ENCODE measurements at regions of chr5 and their contacts with region 1.

Region 1: DNA sequence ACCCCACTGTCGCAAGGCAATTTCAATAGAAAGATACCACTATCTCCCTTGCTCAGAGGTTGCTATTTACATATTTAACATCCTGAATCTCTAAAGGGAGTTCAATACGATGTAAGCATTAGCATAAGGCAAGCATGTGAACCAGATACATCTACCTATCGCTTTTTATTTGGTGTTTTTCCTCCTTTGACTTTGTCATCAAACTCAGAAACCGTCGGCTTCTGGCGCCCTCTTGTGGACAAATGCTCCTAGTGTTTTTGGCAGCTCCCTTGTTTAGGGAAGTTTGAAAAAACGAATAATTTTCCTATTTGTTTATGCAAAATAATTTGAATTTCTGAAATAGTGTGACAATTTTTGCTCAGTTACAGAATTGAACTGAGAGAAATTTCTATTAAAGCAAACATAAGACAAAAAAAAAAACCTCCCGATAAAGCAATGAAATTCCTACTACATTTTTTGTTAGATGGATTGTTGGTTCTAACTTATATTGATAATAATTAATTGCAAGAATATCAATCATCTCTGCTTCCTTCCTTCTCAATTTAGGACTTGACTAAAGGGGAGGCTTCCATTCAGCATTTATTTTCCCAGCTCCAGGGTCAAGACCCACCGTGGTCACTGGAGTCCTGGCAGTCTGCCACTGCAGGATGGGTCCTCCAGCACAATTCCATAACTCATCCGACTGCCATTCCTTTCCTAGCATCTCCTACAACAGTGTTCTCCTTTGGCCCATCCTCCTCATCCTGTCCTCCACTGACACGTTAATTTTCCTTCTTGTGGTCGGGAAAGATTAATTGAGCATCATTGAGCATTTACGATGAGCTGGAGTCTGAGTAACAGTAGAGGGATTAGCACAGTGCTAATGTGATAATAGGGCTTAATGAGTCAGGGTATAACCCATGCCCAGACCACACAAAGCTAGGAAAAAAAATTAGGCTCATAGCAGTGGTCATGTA is 131.8 kb upstream of the CHD1 start:
- DNase-seq: peak; percentile 34
- ATAC-seq: peak; percentile 79
- H3K4me3 ChIP-seq: peak overlapping the region; percentile 0; the same call in 1 of the 2 replicates
- H3K27ac ChIP-seq: no peak overlapping the region
- H3K4me1 ChIP-seq: peaks cover 18% of the 10 kb centered on the region
- H3K27me3 ChIP-seq: no peaks in the 10 kb centered on the region
- CTCF ChIP-seq: peak; percentile 76 to 87 (median 82)
- EP300 ChIP-seq: no peak
- POLR2A ChIP-seq: no peak
- RAD21 ChIP-seq: peak; percentile 95

Region 2: DNA sequence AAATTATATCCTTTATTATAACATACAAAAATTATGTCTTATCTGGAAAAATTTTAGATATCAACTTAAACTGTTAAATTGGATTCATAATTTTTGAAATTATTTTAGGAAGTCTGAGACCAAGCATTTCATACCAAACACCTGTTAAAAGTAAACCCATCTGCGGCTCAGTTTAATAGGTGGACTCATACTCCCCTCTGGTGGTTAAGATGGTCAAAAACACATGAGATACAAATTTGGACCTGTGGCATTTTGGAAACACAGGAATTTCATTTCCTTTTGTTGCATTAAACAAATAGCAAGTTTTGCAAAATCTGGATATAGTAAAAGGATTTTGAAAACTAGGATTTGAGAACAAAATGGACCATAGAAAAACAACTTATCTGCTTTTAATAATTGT is 233.4 kb before region 1 on chr5:
- CTCF ChIA-PET with region 1: interaction called, 6 read pairs
- POLR2A ChIA-PET with region 1: no interaction called
- RAD21 ChIA-PET with region 1: no interaction called
- SMC1A ChIA-PET with region 1: interaction called, 14 read pairs
- in situ Hi-C with region 1: no loop called
- intact Hi-C with region 1: no loop called
- DNase-seq: no peak
- ATAC-seq: peak; percentile 83
- H3K4me3 ChIP-seq: no peak overlapping the region
- H3K27ac ChIP-seq: no peak overlapping the region
- H3K4me1 ChIP-seq: no peaks in the 10 kb centered on the region
- H3K27me3 ChIP-seq: no peaks in the 10 kb centered on the region
- CTCF ChIP-seq: peak; percentile 46 to 60 (median 47); a peak in 5 of 6 replicates
- EP300 ChIP-seq: no peak
- POLR2A ChIP-seq: no peak
- RAD21 ChIP-seq: peak; percentile 88

Region 3: DNA sequence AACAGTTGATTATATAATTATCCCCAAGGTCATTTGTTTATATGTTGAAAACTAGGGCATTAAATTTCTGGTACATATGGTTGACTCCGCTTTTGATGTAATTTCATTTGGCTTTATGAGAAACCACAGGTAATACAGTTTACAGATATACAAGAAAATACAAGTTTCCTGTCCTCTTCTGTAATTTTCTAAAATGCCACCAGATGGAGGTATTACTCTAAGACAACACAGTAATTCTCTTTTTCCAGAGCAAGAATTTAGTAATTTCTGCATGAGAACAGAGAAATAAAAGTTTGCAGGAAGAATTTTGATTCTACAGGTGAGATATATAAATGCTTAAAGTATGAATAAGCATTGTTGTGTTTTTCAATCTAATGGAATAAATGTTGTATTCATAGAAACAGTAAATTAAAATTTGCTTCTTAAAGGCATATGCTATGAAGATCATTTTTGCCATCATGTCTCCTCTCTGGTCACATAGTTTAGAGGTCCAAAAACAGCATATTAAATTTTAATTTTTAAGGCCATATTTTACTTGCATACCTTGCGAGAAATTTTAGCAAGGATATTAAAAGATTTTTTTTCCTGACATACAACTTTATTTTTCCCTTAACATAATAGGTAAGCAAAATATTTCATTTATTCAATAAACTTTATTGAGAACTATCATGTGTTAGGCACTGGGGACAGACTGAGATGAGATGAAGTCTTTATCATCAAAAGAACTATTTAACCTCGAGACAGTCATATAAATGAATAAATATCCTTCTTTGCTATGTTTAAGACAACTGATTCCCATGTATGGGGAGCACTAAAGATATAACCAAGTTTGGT is 154.5 kb before region 1 on chr5:
- CTCF ChIA-PET with region 1: interaction called, 34 read pairs
- POLR2A ChIA-PET with region 1: no interaction called
- RAD21 ChIA-PET with region 1: interaction called, 38 read pairs
- SMC1A ChIA-PET with region 1: interaction called, 26 read pairs
- in situ Hi-C with region 1: no loop called
- intact Hi-C with region 1: loop called (anchors 1 kb)
- DNase-seq: no peak
- ATAC-seq: peak; percentile 70
- H3K4me3 ChIP-seq: no peak overlapping the region
- H3K27ac ChIP-seq: no peak overlapping the region
- H3K4me1 ChIP-seq: no peaks in the 10 kb centered on the region; the same call in 1 of the 2 replicates
- H3K27me3 ChIP-seq: no peaks in the 10 kb centered on the region
- CTCF ChIP-seq: peak; percentile 47 to 65 (median 47); a peak in 5 of 6 replicates
- EP300 ChIP-seq: no peak
- POLR2A ChIP-seq: no peak
- RAD21 ChIP-seq: peak; percentile 92

Region 4: GRCh38 chr5:98969400-98969799 is 91.2 kb before region 1 on chr5:
- CTCF ChIA-PET with region 1: interaction called, 13 read pairs
- POLR2A ChIA-PET with region 1: no interaction called
- RAD21 ChIA-PET with region 1: interaction called, 4 read pairs
- SMC1A ChIA-PET with region 1: interaction called, 12 read pairs
- in situ Hi-C with region 1: no loop called
- intact Hi-C with region 1: no loop called
- DNase-seq: no peak
- ATAC-seq: no peak
- H3K4me3 ChIP-seq: no peak overlapping the region
- H3K27ac ChIP-seq: no peak overlapping the region
- H3K4me1 ChIP-seq: no peaks in the 10 kb centered on the region
- H3K27me3 ChIP-seq: no peaks in the 10 kb centered on the region
- CTCF ChIP-seq: 0 out of 6 replicates have a peak, but pooled peaks of 1 of the 3 experiments have one; percentile 2
- EP300 ChIP-seq: no peak
- POLR2A ChIP-seq: no peak
- RAD21 ChIP-seq: peak; percentile 37; the same call in 1 of the 2 replicates

Region 5: DNA sequence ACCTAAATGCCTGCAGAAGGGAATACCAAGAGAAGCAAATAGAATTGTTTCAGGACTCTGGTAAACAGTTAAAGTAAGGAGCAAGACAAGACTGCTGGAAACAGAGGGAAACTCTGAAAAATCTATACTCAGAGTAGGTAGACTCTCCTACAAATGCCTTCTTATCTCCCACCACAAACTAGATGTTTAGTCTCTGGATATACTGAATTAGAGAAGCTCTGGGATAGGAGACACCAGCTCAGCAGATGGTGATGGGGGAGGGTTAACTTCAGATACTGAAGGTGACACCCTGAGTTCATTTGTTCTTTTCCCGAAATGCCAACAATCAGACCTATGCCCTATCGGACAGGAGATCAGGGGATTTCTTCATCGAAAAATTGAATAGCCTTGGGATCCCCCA is 77.7 kb before region 1 on chr5:
- CTCF ChIA-PET with region 1: no interaction called
- POLR2A ChIA-PET with region 1: no interaction called
- RAD21 ChIA-PET with region 1: no interaction called
- SMC1A ChIA-PET with region 1: no interaction called
- in situ Hi-C with region 1: no loop called
- intact Hi-C with region 1: no loop called
- DNase-seq: no peak
- ATAC-seq: no peak
- H3K4me3 ChIP-seq: no peak overlapping the region
- H3K27ac ChIP-seq: no peak overlapping the region
- H3K4me1 ChIP-seq: no peaks in the 10 kb centered on the region
- H3K27me3 ChIP-seq: no peaks in the 10 kb centered on the region
- CTCF ChIP-seq: no peak
- EP300 ChIP-seq: no peak
- POLR2A ChIP-seq: no peak
- RAD21 ChIP-seq: no peak

Measured in GM12878 (cell line).